Activated CD4-positive, alpha-beta memory T cell treated with anti-CD3 and anti-CD28 coated beads for 36 hours (primary cell): ENCODE measurements at regions of chr11 and their contacts with region 1.

Region 1: GRCh38 chr11:62805076-62805892 is at the start of gene NXF1:
- DNase-seq: peak; percentile 96
- H3K4me3 Mint-ChIP-seq: peak within 1 kb of the TSS; percentile 99
- H3K27ac Mint-ChIP-seq: peak within 1 kb of the TSS; percentile 99
- H3K4me1 Mint-ChIP-seq: peaks cover 34% of the 10 kb centered on the region
- H3K27me3 Mint-ChIP-seq: no peaks in the 10 kb centered on the region
- total RNA-seq, gene NXF1: 70.8 to 83.6 TPM

Region 2: GRCh38 chr11:62705880-62706849 is 99.1 kb before region 1 on chr11:
- CTCF ChIA-PET with region 1: no interaction called
- POLR2A ChIA-PET with region 1: no interaction called
- intact Hi-C with region 1: loop called (anchors 1 kb)
- DNase-seq: peak; percentile 96
- H3K4me3 Mint-ChIP-seq: peak overlapping the region; percentile 85
- H3K27ac Mint-ChIP-seq: peak overlapping the region; percentile 70
- H3K4me1 Mint-ChIP-seq: peaks cover 50% of the 10 kb centered on the region
- H3K27me3 Mint-ChIP-seq: no peaks in the 10 kb centered on the region

Region 3: GRCh38 chr11:62753736-62754603 is 51.3 kb before region 1 on chr11 and contains the start of gene ZBTB3:
- CTCF ChIA-PET with region 1: no interaction called
- POLR2A ChIA-PET with region 1: interaction called, 10 read pairs
- intact Hi-C with region 1: loop called (anchors 2 kb)
- DNase-seq: peak; percentile 98
- H3K4me3 Mint-ChIP-seq: peak within 1 kb of the TSS; percentile 99
- H3K27ac Mint-ChIP-seq: peak within 1 kb of the TSS; percentile 99
- H3K4me1 Mint-ChIP-seq: peaks cover 23% of the 10 kb centered on the region
- H3K27me3 Mint-ChIP-seq: no peaks in the 10 kb centered on the region
- total RNA-seq, gene ZBTB3: 8.4 to 9.7 TPM

Region 4: DNA sequence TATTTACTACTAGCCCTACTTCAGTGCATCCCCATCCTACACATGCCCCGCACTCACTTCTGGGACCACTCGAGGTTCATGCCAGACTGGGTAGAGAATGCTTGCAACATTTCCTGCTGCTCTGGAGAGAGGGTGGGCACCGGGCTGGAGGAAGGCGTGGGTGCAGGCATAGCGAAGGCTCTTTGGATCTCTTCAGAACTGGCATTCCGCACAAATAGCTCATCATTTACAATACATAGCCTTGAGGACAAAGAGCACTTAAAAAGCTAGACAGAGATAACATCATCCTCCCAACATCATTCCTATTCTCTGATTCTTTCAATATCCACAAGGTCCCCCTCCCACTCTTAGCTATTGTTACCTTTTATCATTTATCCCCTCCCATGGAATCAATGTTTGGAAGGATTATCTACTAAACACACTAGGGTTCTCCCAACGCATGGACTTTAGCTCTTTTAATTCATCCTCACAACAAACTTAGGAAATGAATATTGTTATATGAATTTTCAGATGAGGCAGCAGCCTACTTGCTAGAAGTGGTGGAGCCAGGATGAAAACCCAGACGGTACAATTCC is 11.0 kb before region 1 on chr11:
- CTCF ChIA-PET with region 1: interaction called, 3 read pairs
- POLR2A ChIA-PET with region 1: interaction called, 11 read pairs
- intact Hi-C with region 1: loop called (anchors 1 kb)
- DNase-seq: no peak
- H3K4me3 Mint-ChIP-seq: no peak overlapping the region
- H3K27ac Mint-ChIP-seq: peak overlapping the region; percentile 2
- H3K4me1 Mint-ChIP-seq: peaks cover 26% of the 10 kb centered on the region
- H3K27me3 Mint-ChIP-seq: no peaks in the 10 kb centered on the region

Region 5: GRCh38 chr11:62831520-62832335 is 26.4 kb after region 1 on chr11 and contains the start of gene STX5:
- CTCF ChIA-PET with region 1: no interaction called
- POLR2A ChIA-PET with region 1: interaction called, 14 read pairs
- intact Hi-C with region 1: loop called (anchors 1 kb)
- DNase-seq: peak; percentile 100
- H3K4me3 Mint-ChIP-seq: peak within 1 kb of the TSS; percentile 84
- H3K27ac Mint-ChIP-seq: peak within 1 kb of the TSS; percentile 93
- H3K4me1 Mint-ChIP-seq: peaks cover 42% of the 10 kb centered on the region
- H3K27me3 Mint-ChIP-seq: no peaks in the 10 kb centered on the region
- total RNA-seq, gene STX5: 24.6 to 29.2 TPM

Region 6: GRCh38 chr11:62860835-62861563 is 55.7 kb after region 1 on chr11:
- CTCF ChIA-PET with region 1: interaction called, 12 read pairs
- POLR2A ChIA-PET with region 1: interaction called, 36 read pairs
- intact Hi-C with region 1: no loop called
- DNase-seq: peak; percentile 14
- H3K4me3 Mint-ChIP-seq: no peak overlapping the region
- H3K27ac Mint-ChIP-seq: no peak overlapping the region
- H3K4me1 Mint-ChIP-seq: peaks cover 43% of the 10 kb centered on the region
- H3K27me3 Mint-ChIP-seq: no peaks in the 10 kb centered on the region